CD4-positive, alpha-beta memory T cell (primary cell): ENCODE measurements at regions of chr14 and their contacts with region 1.

Region 1: GRCh38 chr14:92680781-92681650 is 67.4 kb downstream of the LGMN start:
- DNase-seq: peak; percentile 68 to 74 (median 72)
- H3K4me3 ChIP-seq: no peak overlapping the region
- H3K4me3 Mint-ChIP-seq: peak overlapping the region in 3 of 8 donors; percentile 13 to 59 (median 43)
- H3K27ac ChIP-seq: peak overlapping the region; percentile 23
- H3K27ac Mint-ChIP-seq: peak overlapping the region; percentile 81 to 90 (median 88)
- H3K4me1 ChIP-seq: peaks cover 27% of the 10 kb centered on the region
- H3K4me1 Mint-ChIP-seq: peaks cover 14 to 35% (median 25%) of the 10 kb centered on the region in 4 donors
- H3K27me3 ChIP-seq: no peaks in the 10 kb centered on the region
- H3K27me3 Mint-ChIP-seq: no peaks in the 10 kb centered on the region

Region 2: DNA sequence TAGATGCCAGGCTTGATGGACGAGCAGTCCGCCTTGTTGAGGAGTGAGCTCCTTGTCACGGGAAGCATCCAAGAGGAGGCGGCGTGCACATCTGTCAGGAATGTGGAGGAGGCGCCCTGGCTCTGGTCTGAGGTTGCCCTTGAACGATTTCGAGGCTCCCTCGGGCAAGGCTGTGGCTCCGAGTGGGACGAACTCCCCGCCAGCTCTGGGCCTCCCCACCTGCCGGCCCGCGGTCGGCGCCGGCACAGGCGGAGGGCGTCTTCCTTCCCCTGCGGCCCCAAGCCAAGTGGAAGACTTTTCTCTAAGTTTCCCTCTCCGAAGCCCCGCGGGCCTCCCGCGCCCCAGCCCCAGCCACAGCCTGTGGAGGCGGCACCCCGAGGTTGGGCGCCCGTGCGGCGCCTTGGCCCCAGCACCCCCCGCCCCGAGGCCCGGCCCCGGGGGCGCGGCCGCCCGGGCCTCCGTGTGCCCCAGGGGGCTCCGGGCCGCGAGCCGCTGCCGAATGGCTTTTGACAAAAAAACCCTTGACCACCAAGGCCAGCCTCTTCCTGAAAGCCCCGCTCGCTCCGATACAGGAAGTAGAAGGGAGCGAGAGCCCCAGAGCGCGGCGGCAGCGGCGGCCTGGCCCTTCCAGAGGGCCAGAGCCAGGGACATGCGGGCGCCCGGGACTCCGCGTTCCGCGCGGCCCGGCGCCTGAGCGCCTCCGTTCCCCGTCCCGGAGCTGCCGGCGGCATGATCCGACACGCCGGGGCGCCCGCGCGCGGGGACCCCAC is 167.6 kb before region 1 on chr14 and contains the start of gene RIN3:
- CTCF ChIA-PET with region 1: no interaction called
- POLR2A ChIA-PET with region 1: interaction called, 3 read pairs
- intact Hi-C with region 1: loop called (anchors 5 kb)
- DNase-seq: peak in 4 of 5 donors; percentile 23 to 44 (median 33)
- H3K4me3 ChIP-seq: peak within 1 kb of the TSS in 1 of 2 donors; percentile 58
- H3K4me3 Mint-ChIP-seq: peak within 1 kb of the TSS; percentile 54 to 84 (median 76)
- H3K27ac ChIP-seq: peak within 1 kb of the TSS; percentile 28
- H3K27ac Mint-ChIP-seq: peak within 1 kb of the TSS in 1 of 7 donors; percentile 74
- H3K4me1 ChIP-seq: peaks cover 26% of the 10 kb centered on the region
- H3K4me1 Mint-ChIP-seq: peaks cover 13 to 39% (median 28%) of the 10 kb centered on the region in 4 donors
- H3K27me3 ChIP-seq: no peaks in the 10 kb centered on the region
- H3K27me3 Mint-ChIP-seq: peaks cover 0 to 2% of the 10 kb centered on the region in 2 donors
- total RNA-seq, gene RIN3: 66.9 to 74.9 TPM

Region 3: DNA sequence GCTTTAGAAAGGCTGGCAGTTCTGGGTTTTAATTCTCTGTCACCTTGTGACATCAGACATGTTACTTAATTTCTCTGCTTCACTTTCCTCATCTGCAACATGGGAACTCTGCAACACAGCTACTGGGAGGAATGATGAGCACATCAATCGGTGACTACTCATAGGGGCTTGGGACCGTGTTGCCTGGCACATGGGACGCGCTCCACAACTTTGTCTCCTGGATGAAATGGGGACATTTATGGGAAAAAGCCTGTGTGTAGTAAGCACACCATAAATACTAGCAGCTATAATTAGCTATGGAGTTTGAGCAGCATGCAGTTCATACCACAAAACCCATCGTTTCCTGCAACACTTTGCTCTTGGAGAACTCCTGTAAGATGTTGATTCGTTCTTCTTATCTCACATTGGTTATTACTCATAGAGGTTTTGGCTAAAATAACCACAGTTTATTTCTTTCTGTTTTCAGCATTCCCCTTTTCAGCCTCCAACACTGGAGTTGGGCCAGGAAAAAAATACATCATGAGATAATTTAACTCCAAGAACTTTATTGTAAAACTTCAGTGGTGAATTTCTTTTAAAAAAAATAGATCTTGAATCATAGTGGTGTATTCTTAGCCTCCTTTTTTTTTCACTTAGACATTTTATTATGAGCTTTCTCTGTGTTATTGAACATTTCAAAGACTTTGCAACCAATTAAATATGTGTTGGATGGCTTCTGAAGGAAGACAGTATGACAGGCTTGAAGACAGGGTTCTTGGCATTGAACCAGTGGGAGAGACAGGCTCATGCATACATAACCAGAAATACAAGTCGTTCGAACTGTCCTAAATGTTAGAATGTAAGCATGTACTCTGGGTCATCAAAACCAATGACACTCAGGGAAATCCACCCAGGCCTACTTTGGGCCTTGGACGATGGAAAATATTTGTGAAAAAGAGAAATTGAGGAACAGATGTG is 94.8 kb before region 1 on chr14:
- CTCF ChIA-PET with region 1: interaction called, 13 read pairs
- POLR2A ChIA-PET with region 1: interaction called, 3 read pairs
- intact Hi-C with region 1: no loop called
- DNase-seq: peak; percentile 61 to 79 (median 68)
- H3K4me3 ChIP-seq: no peak overlapping the region
- H3K4me3 Mint-ChIP-seq: peak overlapping the region; percentile 55 to 90 (median 81)
- H3K27ac ChIP-seq: peak overlapping the region; percentile 52
- H3K27ac Mint-ChIP-seq: peak overlapping the region; percentile 91 to 98 (median 95)
- H3K4me1 ChIP-seq: peaks cover 96% of the 10 kb centered on the region
- H3K4me1 Mint-ChIP-seq: peaks cover 68 to 99% (median 86%) of the 10 kb centered on the region in 4 donors
- H3K27me3 ChIP-seq: no peaks in the 10 kb centered on the region
- H3K27me3 Mint-ChIP-seq: no peaks in the 10 kb centered on the region

Region 4: DNA sequence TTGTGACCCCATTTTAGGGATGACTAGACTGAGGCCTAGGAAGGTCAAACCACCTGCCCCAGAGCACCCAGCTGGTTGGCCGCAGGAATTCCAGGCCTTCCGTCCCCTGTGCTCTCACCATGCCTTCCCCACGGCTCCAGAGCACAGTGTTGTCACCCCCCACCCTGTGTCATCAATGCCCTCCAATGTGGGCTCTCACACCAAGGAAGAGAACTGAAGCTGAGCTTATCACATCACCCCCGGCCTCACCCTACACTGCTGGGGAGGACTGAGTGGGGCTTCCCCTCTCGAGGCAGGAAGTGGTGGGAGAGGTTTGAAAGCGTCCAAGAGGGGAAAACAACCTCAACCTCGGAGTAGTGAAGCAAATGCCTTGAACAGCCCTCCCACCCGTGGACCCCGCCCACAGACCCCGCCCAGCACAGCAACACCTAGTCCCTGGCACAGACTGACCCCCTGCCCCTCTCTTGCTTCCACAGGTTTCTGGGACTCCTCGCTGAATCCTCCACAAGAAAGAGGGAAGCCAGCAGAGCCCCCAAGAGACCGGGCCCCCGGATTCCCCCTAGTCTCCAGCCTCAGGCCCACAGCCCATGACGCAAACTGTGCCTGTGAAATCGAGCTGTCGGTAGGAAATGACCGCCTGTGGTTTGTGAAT is 29.8 kb before region 1 on chr14:
- CTCF ChIA-PET with region 1: interaction called, 5 read pairs
- POLR2A ChIA-PET with region 1: interaction called, 11 read pairs
- intact Hi-C with region 1: loop called (anchors 1 kb)
- DNase-seq: peak; percentile 82 to 95 (median 85)
- H3K4me3 ChIP-seq: peak overlapping the region; percentile 47 to 58
- H3K4me3 Mint-ChIP-seq: peak overlapping the region; percentile 92 to 99 (median 98)
- H3K27ac ChIP-seq: peak overlapping the region; percentile 84
- H3K27ac Mint-ChIP-seq: peak overlapping the region; percentile 96 to 100 (median 99)
- H3K4me1 ChIP-seq: peaks cover 80% of the 10 kb centered on the region
- H3K4me1 Mint-ChIP-seq: peaks cover 51 to 94% (median 67%) of the 10 kb centered on the region in 4 donors
- H3K27me3 ChIP-seq: no peaks in the 10 kb centered on the region
- H3K27me3 Mint-ChIP-seq: no peaks in the 10 kb centered on the region

Region 5: GRCh38 chr14:93073910-93074769 is 393.1 kb after region 1 on chr14:
- CTCF ChIA-PET with region 1: no interaction called
- POLR2A ChIA-PET with region 1: no interaction called
- intact Hi-C with region 1: no loop called
- DNase-seq: no peak
- H3K4me3 ChIP-seq: no peak overlapping the region
- H3K4me3 Mint-ChIP-seq: no peak overlapping the region
- H3K27ac ChIP-seq: no peak overlapping the region
- H3K27ac Mint-ChIP-seq: peak overlapping the region in 3 of 7 donors; percentile 17 to 76 (median 68)
- H3K4me1 ChIP-seq: no peaks in the 10 kb centered on the region
- H3K4me1 Mint-ChIP-seq: peaks cover 14 to 26% (median 19%) of the 10 kb centered on the region in 4 donors
- H3K27me3 ChIP-seq: no peaks in the 10 kb centered on the region
- H3K27me3 Mint-ChIP-seq: no peaks in the 10 kb centered on the region